ENCODE measurements at regions of chr10 and their contacts with region 1.

Region 1: DNA sequence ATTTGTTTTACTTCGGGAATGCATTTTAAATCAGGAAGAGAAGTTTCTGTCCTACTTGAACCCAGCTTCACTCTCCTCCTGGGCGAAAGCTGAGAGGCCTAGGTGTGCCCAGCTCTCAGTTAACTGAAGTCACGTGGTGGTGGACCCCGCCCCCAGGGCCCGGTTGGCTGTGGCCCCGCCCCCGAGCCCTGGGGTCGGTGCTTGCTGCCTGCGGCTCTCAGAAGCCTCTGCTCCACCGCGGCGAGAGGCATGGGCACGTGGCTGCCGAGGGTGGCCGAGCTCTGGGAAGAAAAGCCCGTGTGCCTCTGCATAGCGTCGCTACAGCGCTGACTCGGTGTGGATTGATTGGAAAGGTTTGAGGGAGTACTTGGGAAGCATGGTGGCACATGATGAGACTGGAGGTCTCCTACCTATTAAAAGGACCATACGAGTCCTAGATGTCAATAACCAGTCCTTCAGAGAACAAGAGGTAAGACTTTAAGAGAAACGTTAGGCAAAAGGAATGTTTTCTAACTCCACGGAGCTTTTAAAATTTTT is 34.1 kb downstream of the NET1 start:
- DNase-seq: peak; percentile 97
- H3K4me3 ChIP-seq: peak overlapping the region; percentile 49 to 60
- H3K27ac ChIP-seq: peak overlapping the region; percentile 75 to 85
- H3K4me1 ChIP-seq: peaks cover 10% of the 10 kb centered on the region
- H3K27me3 ChIP-seq: no peaks in the 10 kb centered on the region
- CTCF ChIP-seq: no peak
- POLR2A ChIP-seq: peak; percentile 97

Region 2: GRCh38 chr10:5512881-5513612 is 66.6 kb after region 1 on chr10:
- intact Hi-C with region 1: loop called (anchors 5 kb)
- DNase-seq: no peak
- H3K4me3 ChIP-seq: no peak overlapping the region
- H3K27ac ChIP-seq: peak overlapping the region in 1 of 2 donors; percentile 24
- H3K4me1 ChIP-seq: no peaks in the 10 kb centered on the region
- H3K27me3 ChIP-seq: no peaks in the 10 kb centered on the region
- CTCF ChIP-seq: no peak
- POLR2A ChIP-seq: no peak

Region 3: GRCh38 chr10:5534880-5535856 is 88.7 kb after region 1 on chr10:
- intact Hi-C with region 1: loop called (anchors 5 kb)
- DNase-seq: no peak
- H3K4me3 ChIP-seq: no peak overlapping the region
- H3K27ac ChIP-seq: peak overlapping the region in 1 of 2 donors; percentile 18
- H3K4me1 ChIP-seq: no peaks in the 10 kb centered on the region
- H3K27me3 ChIP-seq: no peaks in the 10 kb centered on the region
- CTCF ChIP-seq: no peak
- POLR2A ChIP-seq: no peak

Region 4: DNA sequence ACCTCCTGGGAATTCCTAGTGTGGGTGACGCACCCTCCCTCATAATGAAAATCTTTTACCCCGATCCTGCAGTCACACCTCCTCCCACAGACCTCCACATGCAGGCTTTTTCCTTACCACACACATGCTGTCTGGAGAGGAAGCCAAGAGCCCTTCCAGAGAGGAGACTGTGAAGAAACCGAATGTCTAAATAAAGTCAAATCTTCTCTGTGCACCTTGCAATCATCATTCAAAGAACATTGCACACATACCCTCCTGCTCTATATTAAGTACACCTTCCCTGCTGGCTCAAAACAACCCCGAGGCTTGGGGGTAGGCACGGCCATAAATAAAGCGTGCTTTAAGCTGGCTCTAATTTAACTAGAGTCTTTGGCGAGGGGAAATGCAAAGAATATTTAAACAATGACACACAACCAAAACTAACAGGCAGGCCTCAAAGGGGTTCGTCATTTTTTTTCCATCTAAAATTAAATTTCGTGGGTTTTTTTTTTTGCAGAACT is 113.2 kb after region 1 on chr10:
- intact Hi-C with region 1: loop called (anchors 5 kb)
- DNase-seq: no peak
- H3K4me3 ChIP-seq: no peak overlapping the region
- H3K27ac ChIP-seq: no peak overlapping the region
- H3K4me1 ChIP-seq: peaks cover 8% of the 10 kb centered on the region
- H3K27me3 ChIP-seq: no peaks in the 10 kb centered on the region
- CTCF ChIP-seq: no peak
- POLR2A ChIP-seq: no peak

Region 5: DNA sequence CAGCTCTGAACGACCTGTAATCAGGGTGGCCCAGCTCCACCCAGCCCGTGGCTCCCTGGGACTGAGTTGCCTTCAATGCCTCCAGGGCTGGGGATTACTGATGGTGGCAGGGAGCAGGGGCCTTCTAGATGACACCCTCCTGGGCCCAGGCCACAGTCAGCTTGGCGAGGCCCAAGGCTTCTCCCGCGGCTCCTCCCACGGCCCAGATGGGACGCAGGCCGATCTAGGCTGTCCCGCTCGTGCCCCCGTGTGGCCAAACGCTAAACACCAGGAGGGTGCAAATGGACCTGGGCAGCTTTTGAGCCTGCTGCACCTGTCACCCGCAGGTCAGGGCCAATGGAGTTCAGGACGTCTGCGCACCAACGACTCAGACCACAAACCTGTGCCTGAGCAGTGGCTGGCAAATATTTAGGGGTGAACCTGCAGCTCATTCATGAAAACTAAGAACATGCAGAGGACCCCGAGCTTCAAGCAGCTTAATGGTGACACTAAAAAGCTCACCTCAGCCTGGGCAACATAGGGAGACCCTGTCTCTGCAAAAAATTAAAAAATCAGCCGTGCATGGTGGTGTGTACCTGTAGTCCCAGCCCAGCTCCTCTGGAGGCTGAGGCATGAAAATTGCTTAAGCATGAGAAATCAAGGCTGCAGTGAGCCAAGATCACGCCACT is 176.8 kb after region 1 on chr10:
- intact Hi-C with region 1: loop called (anchors 1 kb)
- DNase-seq: peak; percentile 82
- H3K4me3 ChIP-seq: no peak overlapping the region
- H3K27ac ChIP-seq: peak overlapping the region in 1 of 2 donors; percentile 28
- H3K4me1 ChIP-seq: no peaks in the 10 kb centered on the region
- H3K27me3 ChIP-seq: no peaks in the 10 kb centered on the region
- CTCF ChIP-seq: peak; percentile 82 to 95 (median 90)
- POLR2A ChIP-seq: no peak

Region 6: DNA sequence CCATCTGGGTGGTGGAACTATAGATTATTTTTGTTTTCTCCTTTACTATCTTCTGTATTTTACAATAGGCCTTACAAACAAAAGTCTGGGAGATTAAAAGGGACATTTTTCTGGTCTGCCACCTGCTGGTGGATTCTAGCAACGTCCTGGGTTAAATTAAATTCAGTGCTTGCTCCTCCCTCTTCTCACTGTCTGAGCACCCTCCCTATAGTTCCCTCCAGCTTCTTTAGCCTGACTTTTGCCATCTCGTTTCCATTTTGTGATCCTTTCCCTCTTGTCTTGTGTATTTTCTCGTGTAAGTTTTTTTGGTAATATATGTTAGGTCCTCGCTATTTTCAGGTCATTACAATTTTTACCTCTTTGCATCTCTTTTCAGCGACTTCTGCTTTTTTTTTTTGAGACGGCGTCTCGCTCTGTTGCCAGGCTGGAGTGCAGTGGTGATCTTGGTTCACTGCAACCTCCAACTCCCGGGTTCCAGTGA is 427.1 kb after region 1 on chr10:
- intact Hi-C with region 1: loop called (anchors 5 kb)
- DNase-seq: peak; percentile 64
- H3K4me3 ChIP-seq: no peak overlapping the region
- H3K27ac ChIP-seq: no peak overlapping the region
- H3K4me1 ChIP-seq: no peaks in the 10 kb centered on the region
- H3K27me3 ChIP-seq: no peaks in the 10 kb centered on the region
- CTCF ChIP-seq: peak; percentile 57 to 80 (median 76)
- POLR2A ChIP-seq: no peak

Region 7: GRCh38 chr10:5889624-5890451 is 443.4 kb after region 1 on chr10 and contains the starts of genes ANKRD16 and FBH1:
- intact Hi-C with region 1: loop called (anchors 5 kb)
- DNase-seq: peak; percentile 99
- H3K4me3 ChIP-seq: peak within 1 kb of the TSS; percentile 85 to 94
- H3K27ac ChIP-seq: peak within 1 kb of the TSS; percentile 73 to 75
- H3K4me1 ChIP-seq: peaks cover 7% of the 10 kb centered on the region
- H3K27me3 ChIP-seq: no peaks in the 10 kb centered on the region
- CTCF ChIP-seq: peak in 1 of 4 experiments; percentile 39
- POLR2A ChIP-seq: peak; percentile 69
- total RNA-seq, gene ANKRD16: 14.4 to 20.1 TPM
- total RNA-seq, gene FBH1: 75.0 to 172 TPM